Panc1 (cell line): ENCODE measurements at regions of chr2 and their contacts with region 1.

Region 1: DNA sequence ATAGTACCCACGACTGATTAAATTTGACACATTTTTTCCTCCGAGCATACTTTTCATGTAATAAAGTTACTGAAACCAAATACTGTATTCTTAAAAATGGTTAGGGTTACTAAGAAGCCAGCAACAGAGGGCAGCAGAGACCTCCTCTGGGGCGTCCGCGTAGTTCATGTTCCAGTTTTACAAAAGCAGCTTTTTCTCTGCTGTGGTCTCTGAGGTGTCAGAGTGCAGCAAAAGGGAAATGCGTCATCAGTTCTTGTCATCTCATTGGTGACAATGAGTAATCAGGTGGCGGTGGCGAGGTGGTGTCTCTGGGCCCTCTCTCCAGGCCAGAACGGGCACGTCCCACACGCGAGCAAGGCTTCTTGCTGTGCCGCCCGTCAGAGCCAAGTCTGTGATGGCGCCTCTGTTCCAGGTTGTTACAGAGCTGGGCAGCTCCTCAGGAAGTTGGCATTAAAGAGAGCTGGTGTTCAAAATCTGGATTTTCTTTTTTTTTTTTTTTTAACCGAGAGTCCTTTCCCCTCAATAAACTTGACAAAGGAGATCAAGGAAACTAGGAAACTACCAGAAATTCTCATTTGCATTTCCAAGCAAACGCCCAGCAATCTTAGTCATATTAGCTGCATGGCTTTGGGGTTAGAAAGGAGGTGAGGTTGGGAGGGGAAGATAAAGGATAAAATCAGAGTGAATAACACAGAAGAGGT is 98.6 kb upstream of the BZW1 start:
- DNase-seq: peak; percentile 92
- ATAC-seq: peak; percentile 97
- H3K4me3 ChIP-seq: peak overlapping the region; percentile 39 to 55
- H3K27ac ChIP-seq: peak overlapping the region; percentile 78
- H3K4me1 ChIP-seq: peaks cover 3% of the 10 kb centered on the region
- H3K27me3 ChIP-seq: no peaks in the 10 kb centered on the region
- CTCF ChIP-seq: peak; percentile 91

Region 2: GRCh38 chr2:200725596-200725995 is 12.4 kb after region 1 on chr2:
- CTCF ChIA-PET with region 1: no interaction called
- POLR2A ChIA-PET with region 1: no interaction called
- in situ Hi-C with region 1: no loop called
- intact Hi-C with region 1: no loop called
- DNase-seq: no peak
- ATAC-seq: no peak
- H3K4me3 ChIP-seq: no peak overlapping the region
- H3K27ac ChIP-seq: no peak overlapping the region
- H3K4me1 ChIP-seq: no peaks in the 10 kb centered on the region
- H3K27me3 ChIP-seq: peaks cover 3% of the 10 kb centered on the region; the same call in 1 of the 2 replicates
- CTCF ChIP-seq: no peak

Region 3: DNA sequence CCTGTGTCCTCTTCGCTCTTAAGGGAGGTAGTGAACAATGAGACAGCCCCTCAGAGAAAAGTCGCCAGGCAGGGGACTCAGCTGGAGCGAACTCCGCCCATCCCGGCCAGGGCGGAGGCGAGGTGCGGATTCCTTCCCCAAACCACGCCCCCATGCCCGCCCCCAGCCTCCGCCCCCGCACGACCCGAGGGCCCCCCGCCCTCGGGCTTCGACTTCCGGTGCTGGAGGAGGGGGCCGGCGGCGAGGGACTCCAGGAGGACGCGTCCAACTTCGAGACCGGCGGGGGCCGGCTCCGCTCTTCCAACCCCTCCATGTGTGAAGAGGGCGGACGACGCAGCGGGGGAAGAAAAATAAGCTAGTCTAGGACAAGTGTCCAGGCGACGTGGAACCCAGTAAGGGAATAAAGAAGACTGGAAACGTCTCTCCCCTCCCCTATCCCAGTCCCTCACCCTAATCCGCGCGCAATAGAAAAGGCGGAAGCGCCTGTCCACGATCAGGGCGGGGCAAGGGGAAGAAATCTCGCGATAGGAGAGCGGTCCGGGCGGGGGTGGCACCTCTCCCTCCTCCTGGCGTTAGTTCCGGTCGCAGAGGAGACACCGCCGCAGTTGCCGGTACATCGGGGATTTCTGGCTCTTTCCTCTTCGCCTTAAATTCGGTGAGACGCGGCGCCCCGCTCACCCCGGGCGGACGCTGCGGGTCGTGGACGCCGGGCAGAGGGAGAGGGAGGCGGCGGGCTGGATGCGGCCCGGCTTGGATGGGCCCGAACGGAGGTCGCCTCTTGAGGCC is 98.4 kb after region 1 on chr2 and contains the start of gene BZW1:
- CTCF ChIA-PET with region 1: interaction called, 6 read pairs
- POLR2A ChIA-PET with region 1: no interaction called
- in situ Hi-C with region 1: no loop called
- intact Hi-C with region 1: loop called (anchors 2 kb)
- DNase-seq: peak; percentile 83
- ATAC-seq: peak; percentile 93
- H3K4me3 ChIP-seq: peak within 1 kb of the TSS; percentile 66 to 69
- H3K27ac ChIP-seq: peak within 1 kb of the TSS; percentile 94
- H3K4me1 ChIP-seq: peaks cover 26% of the 10 kb centered on the region
- H3K27me3 ChIP-seq: no peaks in the 10 kb centered on the region
- CTCF ChIP-seq: no peak
- total RNA-seq, gene BZW1: 247 TPM

Region 4: GRCh38 chr2:200864176-200864976 is 151.2 kb after region 1 on chr2 and contains the start of gene CLK1:
- CTCF ChIA-PET with region 1: no interaction called
- POLR2A ChIA-PET with region 1: no interaction called
- in situ Hi-C with region 1: no loop called
- intact Hi-C with region 1: loop called (anchors 5 kb)
- DNase-seq: peak; percentile 75
- ATAC-seq: peak; percentile 95
- H3K4me3 ChIP-seq: peak within 1 kb of the TSS; percentile 93 to 97
- H3K27ac ChIP-seq: peak within 1 kb of the TSS; percentile 99
- H3K4me1 ChIP-seq: peaks cover 23% of the 10 kb centered on the region
- H3K27me3 ChIP-seq: no peaks in the 10 kb centered on the region
- CTCF ChIP-seq: no peak
- total RNA-seq, gene CLK1: 46.6 TPM

Region 5: DNA sequence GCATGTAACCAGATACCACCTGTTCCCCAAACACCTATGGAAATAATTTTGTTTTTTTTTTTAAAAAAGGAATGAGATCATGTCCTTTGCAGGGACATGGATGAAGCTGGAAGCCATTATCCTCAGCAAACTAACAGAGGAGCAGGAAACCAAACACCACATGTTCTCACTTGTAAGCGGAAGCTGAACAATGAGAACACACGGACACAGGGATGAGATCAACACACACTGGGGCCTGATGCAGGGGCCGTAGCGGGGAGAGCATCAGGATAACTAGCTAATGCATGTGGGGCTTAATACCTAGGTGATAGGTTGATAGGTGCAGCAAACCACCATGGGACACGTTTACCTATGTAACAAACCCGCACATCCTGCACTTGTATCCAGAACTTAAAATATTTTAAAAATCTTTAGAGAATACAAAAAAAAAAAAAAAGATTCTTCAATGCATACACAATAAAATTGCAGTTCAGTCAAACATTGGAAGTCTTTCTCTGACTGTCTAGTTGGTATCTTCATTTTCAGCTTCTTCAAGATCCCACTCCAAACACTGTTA is 458.2 kb after region 1 on chr2:
- CTCF ChIA-PET with region 1: interaction called, 18 read pairs
- POLR2A ChIA-PET with region 1: no interaction called
- in situ Hi-C with region 1: no loop called
- intact Hi-C with region 1: no loop called
- DNase-seq: no peak
- ATAC-seq: no peak
- H3K4me3 ChIP-seq: no peak overlapping the region
- H3K27ac ChIP-seq: no peak overlapping the region
- H3K4me1 ChIP-seq: no peaks in the 10 kb centered on the region
- H3K27me3 ChIP-seq: no peaks in the 10 kb centered on the region
- CTCF ChIP-seq: no peak